ENCODE measurements at regions of chr9 and their contacts with region 1.

Region 1: GRCh38 chr9:95010431-95010838 is 283.9 kb downstream of the AOPEP start:
- DNase-seq: no peak

Region 2: GRCh38 chr9:95061916-95062595 is 51.6 kb after region 1 on chr9:
- intact Hi-C with region 1: loop called in 1 of 2 experiments (anchors 5 kb)
- DNase-seq: no peak

Measured in posterior vena cava (tissue), 2 donors.